ENCODE measurements at regions of chr19 and their contacts with region 1.

Region 1: GRCh38 chr19:41657157-41657556 is 30.3 kb upstream of the CEACAM4 start:
- DNase-seq: no peak
- ATAC-seq: no peak; the same call in 1 of the 2 replicates
- H3K4me3 Mint-ChIP-seq: no peak overlapping the region
- H3K27ac Mint-ChIP-seq: no peak overlapping the region
- H3K4me1 Mint-ChIP-seq: peaks cover 24% of the 10 kb centered on the region
- H3K27me3 Mint-ChIP-seq: peaks cover 38% of the 10 kb centered on the region
- CTCF ChIP-seq: no peak

Region 2: GRCh38 chr19:41541990-41542584 is 115.1 kb before region 1 on chr19:
- CTCF ChIA-PET with region 1: no interaction called
- POLR2A ChIA-PET with region 1: no interaction called
- DNase-seq: peak; percentile 81
- ATAC-seq: peak; percentile 55
- H3K4me3 Mint-ChIP-seq: no peak overlapping the region
- H3K27ac Mint-ChIP-seq: no peak overlapping the region
- H3K4me1 Mint-ChIP-seq: peaks cover 19% of the 10 kb centered on the region
- H3K27me3 Mint-ChIP-seq: peaks cover 27% of the 10 kb centered on the region
- CTCF ChIP-seq: peak; percentile 62

Region 3: DNA sequence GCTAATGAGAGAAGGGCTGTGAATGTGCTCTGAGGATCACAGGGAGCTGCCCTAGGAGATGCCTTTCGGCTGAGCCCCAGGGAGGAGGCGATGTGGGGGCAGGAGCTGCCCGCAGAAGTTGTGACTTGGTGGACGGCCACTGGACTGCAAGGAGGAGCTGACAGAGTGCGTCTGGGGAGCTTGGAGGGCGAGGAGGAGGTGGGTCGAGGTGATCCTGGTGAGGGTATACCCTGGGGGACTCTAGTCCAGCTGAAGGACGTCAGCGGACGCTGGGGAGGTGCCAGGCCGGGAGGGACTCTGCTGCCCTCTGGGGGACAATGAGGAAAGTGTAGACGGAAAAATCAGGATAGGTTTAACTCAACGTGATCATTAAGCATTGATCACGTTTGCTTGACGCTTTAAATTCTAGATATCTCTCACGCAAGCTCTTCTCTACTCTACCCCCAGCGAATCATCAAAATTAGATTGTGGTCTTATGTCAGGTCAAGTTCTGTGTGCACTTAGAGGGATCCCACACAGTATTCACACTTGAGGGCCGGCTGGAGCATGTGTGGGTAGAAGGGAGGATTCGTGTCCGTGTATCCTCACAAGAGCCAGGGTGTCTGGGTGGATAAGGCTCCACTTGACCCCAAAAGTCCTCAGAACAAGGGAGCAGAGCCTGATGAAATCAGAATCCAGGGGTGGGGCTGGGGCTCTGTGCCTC is 34.3 kb after region 1 on chr19:
- CTCF ChIA-PET with region 1: interaction called, 19 read pairs
- POLR2A ChIA-PET with region 1: no interaction called
- DNase-seq: peak; percentile 69
- ATAC-seq: peak; percentile 86
- H3K4me3 Mint-ChIP-seq: no peak overlapping the region; the same call in 1 of the 2 replicates
- H3K27ac Mint-ChIP-seq: no peak overlapping the region
- H3K4me1 Mint-ChIP-seq: peaks cover 2% of the 10 kb centered on the region; the same call in 1 of the 2 replicates
- H3K27me3 Mint-ChIP-seq: peaks cover 39% of the 10 kb centered on the region
- CTCF ChIP-seq: peak; percentile 61

Measured in WTC11 (cell line).